ENCODE measurements at regions of chr3 and their contacts with region 1.

Region 1: DNA sequence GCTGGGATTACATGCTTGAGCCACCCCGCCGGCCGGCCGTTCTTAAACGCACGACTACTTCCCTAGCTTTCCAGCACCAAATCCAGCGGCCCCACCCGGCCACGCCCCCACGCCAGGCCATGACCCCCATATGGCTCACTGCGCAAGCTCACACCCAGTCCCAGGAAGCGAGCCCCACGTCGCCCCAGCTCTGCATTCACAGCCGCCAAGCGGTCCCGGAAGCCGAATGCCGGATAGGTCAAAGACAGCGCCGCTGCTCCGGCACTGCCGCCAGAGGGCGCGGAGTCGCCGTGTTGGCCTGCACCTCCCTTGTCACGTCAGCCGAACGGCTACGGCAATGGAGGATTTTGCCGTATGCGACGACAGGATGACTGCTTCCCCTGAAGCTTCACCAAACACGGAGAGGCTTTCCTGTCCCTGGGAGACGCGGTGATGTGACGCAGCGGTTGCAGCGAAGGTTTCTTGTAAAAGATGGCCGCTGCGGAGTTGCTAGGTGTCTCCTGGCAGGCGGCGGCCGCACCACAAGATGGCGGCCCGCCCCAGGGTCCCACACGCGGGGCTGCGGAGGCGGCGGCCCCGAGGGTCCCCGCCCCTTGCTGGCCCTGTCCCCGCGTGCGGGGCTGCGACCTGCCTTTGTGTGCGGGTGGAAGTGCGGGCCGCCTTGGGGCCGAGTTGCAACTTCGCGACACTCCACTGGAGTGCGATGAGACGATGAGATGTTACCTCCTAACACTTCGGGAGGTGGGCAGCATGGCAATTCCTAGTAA is 30.2 kb upstream of the RPN1 start:
- DNase-seq: peak; percentile 99
- H3K4me3 Mint-ChIP-seq: peak overlapping the region; percentile 93
- H3K27ac Mint-ChIP-seq: peak overlapping the region; percentile 97
- H3K4me1 Mint-ChIP-seq: peaks cover 13% of the 10 kb centered on the region
- H3K27me3 Mint-ChIP-seq: no peaks in the 10 kb centered on the region
- CTCF ChIP-seq: peak; percentile 98

Region 2: GRCh38 chr3:128395500-128396162 is 285.2 kb before region 1 on chr3:
- CTCF ChIA-PET with region 1: no interaction called
- POLR2A ChIA-PET with region 1: no interaction called
- intact Hi-C with region 1: no loop called
- DNase-seq: no peak
- H3K4me3 Mint-ChIP-seq: no peak overlapping the region
- H3K27ac Mint-ChIP-seq: no peak overlapping the region
- H3K4me1 Mint-ChIP-seq: no peaks in the 10 kb centered on the region
- H3K27me3 Mint-ChIP-seq: no peaks in the 10 kb centered on the region
- CTCF ChIP-seq: no peak

Region 3: DNA sequence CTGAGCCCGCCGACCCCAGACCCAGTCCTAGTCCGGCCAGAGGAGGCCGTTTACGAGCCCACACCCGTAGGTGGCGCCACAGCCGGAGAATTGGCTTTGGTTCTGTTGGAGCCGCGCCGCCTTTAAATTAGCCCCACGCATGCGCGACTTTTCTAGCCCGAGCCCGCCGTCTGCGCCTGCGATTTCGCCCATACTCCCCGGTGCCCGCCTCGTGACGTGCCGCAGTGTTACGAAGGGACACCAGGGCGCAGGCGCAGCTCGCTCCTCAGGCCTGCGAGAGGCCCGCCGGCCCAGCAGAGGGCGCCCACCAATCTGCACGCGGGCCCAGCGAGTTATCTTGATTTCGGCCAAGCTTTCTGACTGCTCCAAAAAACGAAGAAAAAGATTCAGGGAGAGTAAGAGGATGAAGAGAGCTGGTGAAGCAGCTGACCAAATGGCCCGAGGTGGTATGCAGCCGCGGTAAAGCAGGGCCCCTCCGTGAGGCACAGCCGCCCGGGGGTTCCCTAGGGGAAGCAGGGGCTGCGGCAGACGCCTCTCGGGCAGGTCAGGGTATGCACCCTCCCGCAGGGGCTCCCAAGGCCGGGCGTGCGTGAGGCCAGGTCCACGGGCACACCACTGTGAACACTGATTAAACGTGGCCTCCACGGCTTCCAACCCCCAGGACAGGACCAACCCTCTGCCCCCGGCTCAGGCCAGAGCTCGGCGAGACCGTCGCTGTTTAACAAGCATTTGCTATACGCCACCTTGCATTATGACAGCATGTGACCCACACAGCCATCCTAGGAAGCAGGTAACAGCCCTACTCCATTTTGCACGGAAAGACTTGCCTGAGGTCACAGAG is 63.0 kb before region 1 on chr3:
- CTCF ChIA-PET with region 1: interaction called, 6 read pairs
- POLR2A ChIA-PET with region 1: interaction called, 14 read pairs
- intact Hi-C with region 1: loop called (anchors 2 kb)
- DNase-seq: peak; percentile 81
- H3K4me3 Mint-ChIP-seq: peak overlapping the region; percentile 90
- H3K27ac Mint-ChIP-seq: peak overlapping the region; percentile 96
- H3K4me1 Mint-ChIP-seq: peaks cover 18% of the 10 kb centered on the region
- H3K27me3 Mint-ChIP-seq: no peaks in the 10 kb centered on the region
- CTCF ChIP-seq: peak; percentile 64

Region 4: GRCh38 chr3:128665362-128666038 is 15.3 kb before region 1 on chr3:
- CTCF ChIA-PET with region 1: interaction called, 37 read pairs
- POLR2A ChIA-PET with region 1: interaction called, 13 read pairs
- intact Hi-C with region 1: no loop called
- DNase-seq: no peak
- H3K4me3 Mint-ChIP-seq: no peak overlapping the region
- H3K27ac Mint-ChIP-seq: no peak overlapping the region
- H3K4me1 Mint-ChIP-seq: no peaks in the 10 kb centered on the region
- H3K27me3 Mint-ChIP-seq: peaks cover 23% of the 10 kb centered on the region
- CTCF ChIP-seq: no peak

Region 5: DNA sequence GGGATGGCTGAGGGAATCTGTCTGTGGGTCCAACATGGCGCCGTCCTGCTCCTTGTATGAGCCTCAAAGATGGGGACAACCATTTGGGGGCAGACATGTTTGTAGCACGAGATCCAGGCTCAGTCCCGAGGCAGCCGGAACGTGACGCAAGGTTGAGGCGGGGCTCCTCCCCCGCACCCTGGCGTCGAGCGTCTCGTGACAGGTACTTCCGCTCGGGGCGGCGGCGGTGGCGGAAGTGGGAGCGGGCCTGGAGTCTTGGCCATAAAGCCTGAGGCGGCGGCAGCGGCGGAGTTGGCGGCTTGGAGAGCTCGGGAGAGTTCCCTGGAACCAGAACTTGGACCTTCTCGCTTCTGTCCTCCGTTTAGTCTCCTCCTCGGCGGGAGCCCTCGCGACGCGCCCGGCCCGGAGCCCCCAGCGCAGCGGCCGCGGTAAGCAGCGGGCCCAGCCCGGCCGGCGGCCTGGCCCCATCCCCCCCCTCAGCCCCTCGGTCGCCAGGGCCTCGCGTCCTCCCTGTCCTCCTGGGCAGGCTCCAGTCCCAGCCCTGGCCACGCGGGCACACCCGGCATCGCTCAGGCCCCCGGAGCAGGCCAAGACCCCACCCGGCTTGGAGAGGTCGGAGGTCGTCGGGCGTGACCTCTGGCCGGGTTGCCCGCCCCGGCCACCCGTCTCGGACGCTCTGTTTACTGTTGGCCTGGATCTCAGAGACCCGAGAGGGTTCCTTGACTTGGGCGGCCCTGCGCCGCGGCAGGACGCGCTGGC is 45.3 kb after region 1 on chr3 and contains the start of gene RAB7A:
- CTCF ChIA-PET with region 1: interaction called, 30 read pairs
- POLR2A ChIA-PET with region 1: interaction called, 59 read pairs
- intact Hi-C with region 1: loop called (anchors 1 kb)
- DNase-seq: peak; percentile 97
- H3K4me3 Mint-ChIP-seq: peak within 1 kb of the TSS; percentile 78
- H3K27ac Mint-ChIP-seq: peak within 1 kb of the TSS; percentile 90
- H3K4me1 Mint-ChIP-seq: peaks cover 16% of the 10 kb centered on the region
- H3K27me3 Mint-ChIP-seq: no peaks in the 10 kb centered on the region
- CTCF ChIP-seq: no peak
- total RNA-seq, gene RAB7A: 172 and 221 TPM in 2 replicates

Region 6: DNA sequence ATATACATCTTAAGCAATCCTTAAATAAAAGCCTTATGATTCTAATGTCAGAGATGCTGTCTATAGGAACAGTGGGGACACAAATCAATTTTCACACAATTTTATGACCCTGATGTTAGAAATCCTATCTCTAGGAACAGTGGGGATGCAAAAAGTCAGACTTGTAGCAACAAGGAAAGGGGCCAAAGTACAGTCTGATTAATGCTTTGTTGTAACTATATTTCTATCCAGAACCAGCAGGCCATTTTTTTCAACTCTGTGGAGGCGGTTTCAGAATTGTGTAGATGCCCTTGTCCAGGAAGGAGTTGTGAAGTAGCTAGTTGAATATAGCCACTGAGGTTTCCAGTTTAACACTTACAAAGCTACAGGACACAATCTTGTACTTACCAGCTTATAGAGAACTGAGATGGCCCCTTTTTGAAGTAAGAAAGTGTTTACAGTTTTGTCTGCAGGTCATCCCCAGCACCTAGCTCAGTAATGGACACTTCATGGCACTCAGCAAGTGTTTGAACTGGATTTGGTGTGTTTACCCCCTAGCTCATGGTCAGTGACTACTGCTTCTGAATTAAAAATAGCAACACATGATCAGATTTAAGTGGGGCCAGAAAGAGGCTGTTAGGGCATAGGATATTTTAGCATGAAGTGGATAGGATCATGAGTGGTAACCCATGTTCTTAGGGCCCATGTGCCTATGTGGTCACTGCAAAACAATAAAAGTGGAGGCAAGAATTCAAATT is 99.5 kb after region 1 on chr3:
- CTCF ChIA-PET with region 1: interaction called, 10 read pairs
- POLR2A ChIA-PET with region 1: no interaction called
- intact Hi-C with region 1: no loop called
- DNase-seq: no peak
- H3K4me3 Mint-ChIP-seq: no peak overlapping the region
- H3K27ac Mint-ChIP-seq: no peak overlapping the region
- H3K4me1 Mint-ChIP-seq: peaks cover 28% of the 10 kb centered on the region
- H3K27me3 Mint-ChIP-seq: no peaks in the 10 kb centered on the region
- CTCF ChIP-seq: no peak

Region 7: DNA sequence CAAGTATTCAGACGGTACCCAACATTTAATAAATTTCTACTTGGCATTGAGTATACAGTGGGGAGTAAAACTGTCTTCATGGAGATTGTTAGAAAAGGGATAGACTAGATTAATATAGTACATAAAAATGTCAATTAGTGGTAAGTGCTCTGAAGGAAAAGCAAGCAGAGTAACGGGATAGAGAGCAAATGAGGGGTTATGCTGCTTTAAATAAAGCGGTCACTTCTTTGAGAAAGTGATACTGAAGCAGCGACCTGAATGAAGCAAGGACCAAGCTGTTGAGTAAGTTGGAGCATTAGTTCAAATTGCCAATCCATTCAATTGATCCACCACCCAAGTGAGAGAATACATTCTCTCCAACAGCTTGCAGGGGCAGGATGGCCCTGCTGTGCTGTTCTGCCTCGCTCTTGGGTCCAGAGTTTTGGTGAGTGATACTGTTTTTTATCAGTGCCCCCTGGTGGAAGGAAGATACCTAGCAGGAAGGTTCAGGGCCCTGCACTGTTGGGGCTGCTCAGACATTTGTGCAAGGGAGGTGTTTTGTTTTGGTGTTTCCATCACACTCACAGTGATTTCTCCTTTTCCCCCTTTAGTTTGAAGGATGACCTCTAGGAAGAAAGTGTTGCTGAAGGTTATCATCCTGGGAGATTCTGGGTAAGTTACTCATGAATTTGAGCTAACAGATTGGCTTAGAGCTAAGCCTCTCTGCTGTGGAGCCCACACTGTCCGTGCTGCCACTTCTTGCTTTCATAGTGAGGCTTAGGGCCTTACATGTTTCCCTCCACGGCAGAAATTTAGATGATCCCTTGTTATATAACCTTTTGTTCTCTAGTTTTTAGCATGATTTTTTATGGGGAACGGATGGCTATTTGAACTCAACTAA is 114.2 kb after region 1 on chr3:
- CTCF ChIA-PET with region 1: interaction called, 124 read pairs
- POLR2A ChIA-PET with region 1: interaction called, 34 read pairs
- intact Hi-C with region 1: loop called (anchors 1 kb)
- DNase-seq: peak; percentile 78
- H3K4me3 Mint-ChIP-seq: no peak overlapping the region
- H3K27ac Mint-ChIP-seq: peak overlapping the region; percentile 10
- H3K4me1 Mint-ChIP-seq: peaks cover 17% of the 10 kb centered on the region
- H3K27me3 Mint-ChIP-seq: no peaks in the 10 kb centered on the region
- CTCF ChIP-seq: peak; percentile 78

Region 8: GRCh38 chr3:128879125-128879969 is 198.6 kb after region 1 on chr3 and contains the start of gene ACAD9:
- CTCF ChIA-PET with region 1: interaction called, 32 read pairs
- POLR2A ChIA-PET with region 1: interaction called, 89 read pairs
- intact Hi-C with region 1: loop called (anchors 1 kb)
- DNase-seq: peak; percentile 98
- H3K4me3 Mint-ChIP-seq: peak within 1 kb of the TSS; percentile 82
- H3K27ac Mint-ChIP-seq: peak within 1 kb of the TSS; percentile 92
- H3K4me1 Mint-ChIP-seq: peaks cover 37% of the 10 kb centered on the region
- H3K27me3 Mint-ChIP-seq: no peaks in the 10 kb centered on the region
- CTCF ChIP-seq: no peak
- total RNA-seq, gene ACAD9: 43.1 and 44.7 TPM in 2 replicates

Region 9: DNA sequence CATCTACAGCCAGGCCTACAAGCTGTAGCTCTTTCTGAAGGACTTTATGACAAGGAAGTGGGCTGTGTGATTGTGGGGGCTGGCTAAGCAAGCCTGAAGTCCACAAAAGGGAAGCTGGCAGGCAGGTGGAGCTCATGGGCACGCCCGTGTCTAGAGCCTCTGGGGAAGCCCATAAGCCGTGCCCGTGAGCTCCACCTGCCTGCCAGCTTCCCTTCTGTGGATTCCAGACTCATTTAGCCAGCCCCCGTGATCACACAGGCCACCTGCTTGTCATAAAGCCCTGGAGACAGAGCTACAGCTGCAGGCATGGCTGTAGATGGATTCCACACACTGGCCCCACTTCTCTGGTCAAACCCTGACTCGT is 335.6 kb after region 1 on chr3:
- CTCF ChIA-PET with region 1: no interaction called
- POLR2A ChIA-PET with region 1: no interaction called
- intact Hi-C with region 1: no loop called
- DNase-seq: peak; percentile 25
- H3K4me3 Mint-ChIP-seq: no peak overlapping the region
- H3K27ac Mint-ChIP-seq: no peak overlapping the region
- H3K4me1 Mint-ChIP-seq: no peaks in the 10 kb centered on the region
- H3K27me3 Mint-ChIP-seq: no peaks in the 10 kb centered on the region
- CTCF ChIP-seq: no peak

Region 10: GRCh38 chr3:129399145-129399894 is 718.5 kb after region 1 on chr3:
- CTCF ChIA-PET with region 1: no interaction called
- POLR2A ChIA-PET with region 1: no interaction called
- intact Hi-C with region 1: no loop called
- DNase-seq: peak; percentile 97
- H3K4me3 Mint-ChIP-seq: peak overlapping the region; percentile 88
- H3K27ac Mint-ChIP-seq: peak overlapping the region; percentile 97
- H3K4me1 Mint-ChIP-seq: peaks cover 30% of the 10 kb centered on the region
- H3K27me3 Mint-ChIP-seq: no peaks in the 10 kb centered on the region
- CTCF ChIP-seq: peak; percentile 57

Measured in MCF 10A (cell line).